Dorsolateral prefrontal cortex (tissue), 120 donors: ENCODE measurements at regions of chr2 and their contacts with region 1.

Region 1: DNA sequence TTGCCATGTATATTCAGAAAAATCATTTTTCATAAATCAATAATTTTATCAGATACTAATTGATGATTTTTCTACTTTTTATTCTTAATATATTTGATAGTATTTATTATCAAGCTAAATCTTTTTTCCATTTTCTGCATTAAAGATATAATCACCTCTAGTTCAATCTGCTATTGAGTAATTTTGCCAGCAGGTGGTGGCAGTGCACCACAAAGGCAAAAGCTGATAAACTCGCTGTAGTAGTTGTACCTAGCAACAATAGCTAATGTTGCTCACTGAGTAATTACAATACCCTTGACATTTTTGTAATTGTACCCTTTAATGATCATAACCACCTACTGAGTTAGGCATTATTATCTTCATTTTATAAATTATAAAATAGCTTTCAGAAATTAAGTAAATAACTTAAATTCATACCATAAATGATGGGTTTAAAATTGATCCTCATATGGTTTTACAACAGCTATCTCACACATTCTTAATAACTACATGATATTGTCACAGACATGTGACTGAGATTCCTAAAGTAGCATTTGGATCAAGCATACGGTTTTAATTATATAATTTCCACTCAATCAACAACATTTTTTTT is 52.0 kb upstream of the CALCRL start:
- DNase-seq: peak in 7 of 10 donors; percentile 24 to 75 (median 55)
- H3K4me3 ChIP-seq: no peak overlapping the region
- H3K27ac ChIP-seq: no peak overlapping the region
- H3K27me3 ChIP-seq: no peaks in the 10 kb centered on the region
- CTCF ChIP-seq: peak; percentile 68 to 96 (median 84)

Region 2: GRCh38 chr2:187774551-187775071 is 274.6 kb after region 1 on chr2:
- intact Hi-C with region 1: no loop called
- DNase-seq: no peak
- H3K4me3 ChIP-seq: no peak overlapping the region
- H3K27ac ChIP-seq: no peak overlapping the region
- H3K27me3 ChIP-seq: no peaks in the 10 kb centered on the region
- CTCF ChIP-seq: no peak

Region 3: DNA sequence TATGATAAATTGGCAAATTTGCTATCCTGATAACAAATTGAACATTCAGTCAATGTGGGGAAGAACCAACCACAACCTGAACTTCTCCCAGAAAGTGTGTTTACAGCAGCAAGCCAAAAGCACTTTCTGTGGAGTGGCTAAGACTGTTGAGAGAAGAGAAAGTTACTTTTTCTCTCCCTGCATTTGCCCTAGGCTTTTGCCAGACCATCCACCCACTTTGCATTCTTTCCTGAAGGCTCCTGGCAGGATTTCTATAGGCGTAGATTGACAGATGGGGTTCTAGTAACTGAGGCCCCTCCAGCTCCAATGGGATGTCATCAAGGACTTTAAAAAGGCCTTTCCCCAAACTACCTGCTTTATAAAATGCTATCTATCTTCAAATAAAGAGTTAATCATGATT is 1006.8 kb after region 1 on chr2:
- intact Hi-C with region 1: loop called in 1 of 2 experiments (anchors 5 kb)
- DNase-seq: no peak
- H3K4me3 ChIP-seq: no peak overlapping the region
- H3K27ac ChIP-seq: no peak overlapping the region
- H3K27me3 ChIP-seq: no peaks in the 10 kb centered on the region
- CTCF ChIP-seq: no peak